Activated CD4-positive, alpha-beta T cell treated with anti-CD3 and anti-CD28 coated beads, Interleukin-2, amount 10 ng/mL, durations not matched to agents 24 days and 14 days (primary cell): ENCODE measurements at regions of chr22 and their contacts with region 1.

Region 1: GRCh38 chr22:40679964-40680818 is 907 bp downstream of the MCHR1 start:
- DNase-seq: peak; percentile 60
- H3K4me3 Mint-ChIP-seq: no peak overlapping the region
- H3K27ac Mint-ChIP-seq: no peak overlapping the region
- H3K4me1 Mint-ChIP-seq: peaks cover 23% of the 10 kb centered on the region
- H3K27me3 Mint-ChIP-seq: peaks cover 9% of the 10 kb centered on the region

Region 2: GRCh38 chr22:40651563-40652501 is 28.4 kb before region 1 on chr22:
- intact Hi-C with region 1: loop called (anchors 1 kb)
- DNase-seq: peak; percentile 91
- H3K4me3 Mint-ChIP-seq: peak overlapping the region; percentile 55
- H3K27ac Mint-ChIP-seq: peak overlapping the region; percentile 85
- H3K4me1 Mint-ChIP-seq: peaks cover 22% of the 10 kb centered on the region
- H3K27me3 Mint-ChIP-seq: no peaks in the 10 kb centered on the region

Region 3: GRCh38 chr22:40714192-40714951 is 34.2 kb after region 1 on chr22:
- intact Hi-C with region 1: loop called (anchors 1 kb)
- DNase-seq: no peak
- H3K4me3 Mint-ChIP-seq: no peak overlapping the region
- H3K27ac Mint-ChIP-seq: peak overlapping the region; percentile 34
- H3K4me1 Mint-ChIP-seq: peaks cover 24% of the 10 kb centered on the region
- H3K27me3 Mint-ChIP-seq: peaks cover 16% of the 10 kb centered on the region

Region 4: DNA sequence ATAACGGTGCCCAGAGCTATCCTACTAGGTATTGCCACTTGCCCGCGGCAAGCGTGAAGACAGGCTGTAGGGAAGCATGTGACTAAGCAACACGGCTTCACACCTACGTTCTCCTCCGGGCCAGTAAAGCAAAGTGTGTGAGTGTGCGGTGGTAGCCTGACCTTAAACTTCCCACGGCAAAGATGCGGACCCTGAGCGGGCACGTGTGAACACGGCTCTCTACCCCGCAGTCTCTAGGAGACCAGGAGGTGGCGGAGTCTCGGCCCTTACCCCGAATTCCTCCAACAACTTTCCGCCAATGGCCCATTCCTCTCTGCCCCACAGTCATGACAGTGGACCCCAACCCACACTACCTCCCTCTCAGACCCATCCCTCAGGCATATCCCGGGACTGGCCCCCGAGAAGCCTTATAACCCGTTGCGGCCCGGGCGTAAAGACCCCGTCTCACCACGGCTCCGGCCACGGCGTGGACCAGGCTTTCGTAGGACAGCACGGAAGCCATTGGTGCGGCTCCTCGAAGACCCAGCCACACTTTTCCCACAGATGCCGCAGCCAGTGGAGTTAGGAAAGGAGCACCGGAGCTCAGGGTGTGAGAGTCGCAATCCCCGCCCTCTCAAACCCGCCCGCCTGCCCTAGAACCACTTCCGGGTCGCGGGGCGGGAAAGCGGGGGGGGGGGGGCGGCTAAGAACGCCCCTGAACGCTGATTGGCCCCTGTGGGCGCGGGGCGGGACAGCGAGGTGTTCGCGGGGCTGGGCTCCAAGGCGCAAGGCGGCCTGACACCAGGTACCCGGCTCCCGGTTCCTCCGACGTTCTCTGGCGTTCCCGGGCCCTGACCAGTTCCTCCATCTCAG is 138.8 kb after region 1 on chr22 and contains the start of gene SLC25A17:
- intact Hi-C with region 1: loop called (anchors 1 kb)
- DNase-seq: peak; percentile 96
- H3K4me3 Mint-ChIP-seq: peak within 1 kb of the TSS; percentile 92
- H3K27ac Mint-ChIP-seq: peak within 1 kb of the TSS; percentile 94
- H3K4me1 Mint-ChIP-seq: peaks cover 30% of the 10 kb centered on the region
- H3K27me3 Mint-ChIP-seq: no peaks in the 10 kb centered on the region
- total RNA-seq, gene SLC25A17: 32.8 and 37.7 TPM in 2 replicates

Region 5: DNA sequence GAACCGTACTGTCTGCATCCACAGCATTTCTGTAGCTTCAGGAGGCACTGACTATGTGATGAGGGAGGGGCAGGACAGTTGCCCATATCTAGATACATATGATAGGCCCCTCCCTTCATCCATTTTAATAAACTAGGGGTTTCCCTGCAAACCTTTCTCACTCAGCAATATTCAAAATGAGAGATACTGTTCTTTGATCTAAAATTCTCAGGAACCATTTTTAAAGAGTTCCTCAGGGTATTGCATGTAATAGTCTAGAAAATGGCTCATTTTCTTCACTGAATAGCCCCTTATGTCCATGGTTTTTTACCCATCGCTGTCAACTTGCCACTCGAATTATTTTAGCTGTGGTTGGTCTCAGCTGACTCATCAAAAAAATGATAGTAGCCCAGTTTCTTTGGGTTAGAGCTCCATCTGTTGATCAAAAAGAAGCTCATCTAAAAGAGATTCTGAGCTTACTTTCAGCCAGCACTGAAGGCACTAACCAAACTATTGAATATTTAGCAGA is 218.7 kb after region 1 on chr22:
- intact Hi-C with region 1: loop called (anchors 1 kb)
- DNase-seq: peak; percentile 77
- H3K4me3 Mint-ChIP-seq: peak overlapping the region; percentile 34
- H3K27ac Mint-ChIP-seq: peak overlapping the region; percentile 80
- H3K4me1 Mint-ChIP-seq: peaks cover 8% of the 10 kb centered on the region
- H3K27me3 Mint-ChIP-seq: no peaks in the 10 kb centered on the region